Stomach (tissue), 19 donors: ENCODE measurements at regions of chr16 and their contacts with region 1.

Region 1: GRCh38 chr16:73878611-73879010 is 418.0 kb upstream of the PSMD7 start:
- DNase-seq: peak in 1 of 2 donors; percentile 86
- H3K4me3 ChIP-seq: no peak overlapping the region
- H3K27ac ChIP-seq: no peak overlapping the region
- H3K4me1 ChIP-seq: peaks cover 0 to 3% (median 0%) of the 10 kb centered on the region in 4 donors
- H3K27me3 ChIP-seq: peaks cover 0 to 12% (median 0%) of the 10 kb centered on the region in 3 donors
- CTCF ChIP-seq: peak in 2 of 7 experiments; percentile 38 to 42
- EP300 ChIP-seq: no peak
- POLR2A ChIP-seq: no peak

Region 2: DNA sequence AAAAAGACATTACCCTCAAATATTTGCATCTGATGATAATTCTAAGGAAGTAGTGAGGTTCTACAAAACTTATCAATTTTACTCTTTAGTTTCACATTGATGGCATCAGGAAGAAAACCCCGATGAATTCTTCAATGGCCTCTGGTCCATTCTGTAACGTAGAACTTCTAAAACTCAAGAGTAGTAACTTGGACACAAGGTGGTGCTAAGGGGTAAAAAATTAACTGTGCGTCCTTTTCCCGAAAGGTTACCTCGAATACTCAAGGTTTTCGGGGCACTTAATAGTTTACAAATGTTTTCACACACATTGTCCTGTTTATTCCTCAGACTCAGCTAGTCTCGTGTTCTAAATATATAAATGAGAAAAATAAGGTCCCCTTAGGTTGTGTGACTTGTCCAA is 313.3 kb before region 1 on chr16:
- intact Hi-C with region 1: loop called (anchors 5 kb)
- DNase-seq: peak in 1 of 2 donors; percentile 31
- H3K4me3 ChIP-seq: no peak overlapping the region
- H3K27ac ChIP-seq: no peak overlapping the region
- H3K4me1 ChIP-seq: no peaks in the 10 kb centered on the region
- H3K27me3 ChIP-seq: peaks cover 0 to 16% (median 0%) of the 10 kb centered on the region in 3 donors
- CTCF ChIP-seq: peak in 1 of 7 experiments; percentile 38
- EP300 ChIP-seq: no peak
- POLR2A ChIP-seq: no peak

Region 3: GRCh38 chr16:73845238-73846006 is 33.2 kb before region 1 on chr16:
- intact Hi-C with region 1: no loop called
- DNase-seq: no peak
- H3K4me3 ChIP-seq: no peak overlapping the region
- H3K27ac ChIP-seq: no peak overlapping the region
- H3K4me1 ChIP-seq: no peaks in the 10 kb centered on the region
- H3K27me3 ChIP-seq: no peaks in the 10 kb centered on the region
- CTCF ChIP-seq: no peak
- EP300 ChIP-seq: no peak
- POLR2A ChIP-seq: no peak